CD4-positive, alpha-beta T cell (primary cell): ENCODE measurements at regions of chr17 and their contacts with region 1.

Region 1: GRCh38 chr17:17591355-17592298 is at the start of gene PEMT:
- DNase-seq: peak; percentile 84 to 98 (median 91)
- ATAC-seq: peak; percentile 87
- H3K4me3 ChIP-seq: peak within 1 kb of the TSS; percentile 64
- H3K4me3 Mint-ChIP-seq: peak within 1 kb of the TSS; percentile 89
- H3K27ac ChIP-seq: peak within 1 kb of the TSS; percentile 81 to 85
- H3K27ac Mint-ChIP-seq: peak within 1 kb of the TSS; percentile 92
- H3K4me1 ChIP-seq: peaks cover 25% of the 10 kb centered on the region
- H3K4me1 Mint-ChIP-seq: peaks cover 21% of the 10 kb centered on the region
- H3K27me3 ChIP-seq: no peaks in the 10 kb centered on the region
- H3K27me3 Mint-ChIP-seq: no peaks in the 10 kb centered on the region
- CTCF ChIP-seq: no peak
- total RNA-seq, gene PEMT: 11.4 to 12.0 TPM

Region 2: GRCh38 chr17:16653209-16654041 is 938.2 kb before region 1 on chr17 and contains the start of gene ZNF624:
- CTCF ChIA-PET with region 1: no interaction called
- POLR2A ChIA-PET with region 1: no interaction called
- intact Hi-C with region 1: loop called in 1 of 2 experiments (anchors 5 kb)
- DNase-seq: peak; percentile 78 to 94 (median 83)
- ATAC-seq: peak; percentile 97
- H3K4me3 ChIP-seq: peak within 1 kb of the TSS; percentile 93
- H3K4me3 Mint-ChIP-seq: peak within 1 kb of the TSS; percentile 86
- H3K27ac ChIP-seq: peak within 1 kb of the TSS in 1 of 2 donors; percentile 43
- H3K27ac Mint-ChIP-seq: peak within 1 kb of the TSS; percentile 84
- H3K4me1 ChIP-seq: peaks cover 14% of the 10 kb centered on the region
- H3K4me1 Mint-ChIP-seq: peaks cover 31% of the 10 kb centered on the region
- H3K27me3 ChIP-seq: no peaks in the 10 kb centered on the region
- H3K27me3 Mint-ChIP-seq: peaks cover 18% of the 10 kb centered on the region
- CTCF ChIP-seq: no peak
- total RNA-seq, gene ZNF624: 2.8 to 3.2 TPM

Region 3: DNA sequence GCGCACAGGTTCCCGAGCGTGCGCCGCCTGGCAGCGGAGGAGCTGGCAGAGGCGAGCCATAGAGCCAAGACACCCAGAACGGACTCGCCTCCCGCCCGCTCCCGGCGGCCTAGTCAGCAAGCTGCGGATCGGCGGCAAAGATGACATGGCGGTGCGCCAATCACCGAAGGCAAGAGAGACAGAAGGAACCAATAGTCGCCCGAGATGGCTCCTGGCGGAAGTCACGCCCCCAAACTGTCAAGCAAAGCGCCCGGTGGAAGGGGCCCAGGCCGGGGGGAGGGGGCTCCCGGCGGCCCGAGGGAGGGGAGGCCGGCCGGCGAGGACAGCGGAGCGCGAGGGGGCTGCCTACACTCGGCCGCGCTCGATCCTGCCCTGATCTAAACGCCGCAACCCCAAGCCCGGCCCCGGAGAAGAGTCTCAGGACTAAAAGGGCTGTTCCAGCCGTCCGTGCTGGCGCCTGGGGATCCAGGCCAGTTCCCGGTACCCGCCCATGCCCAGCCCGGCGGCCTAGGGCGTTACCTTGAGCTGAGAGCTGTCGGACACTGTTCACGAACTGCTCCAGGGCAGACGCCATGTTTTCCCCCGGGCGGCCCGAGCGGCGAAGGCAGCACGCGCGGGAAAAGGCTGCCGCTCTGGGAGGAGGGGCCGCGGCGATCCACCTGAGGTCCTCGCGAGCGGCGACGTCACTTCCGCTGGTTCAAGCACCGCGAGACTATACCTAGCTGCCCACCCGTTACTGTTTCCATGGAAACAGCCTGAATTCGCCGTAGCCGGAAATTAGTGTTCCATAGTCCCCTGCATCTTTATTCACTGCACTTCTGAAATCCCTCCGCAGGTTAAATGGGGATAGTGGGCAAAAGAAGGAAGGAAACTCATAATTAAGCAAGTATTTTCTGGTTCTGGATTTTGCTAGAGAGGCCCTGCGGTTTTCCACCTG is 310.7 kb before region 1 on chr17 and contains the start of gene COPS3:
- CTCF ChIA-PET with region 1: no interaction called
- POLR2A ChIA-PET with region 1: interaction called, 3 read pairs
- intact Hi-C with region 1: loop called in 1 of 2 experiments (anchors 5 kb)
- DNase-seq: peak; percentile 92 to 99 (median 96)
- ATAC-seq: peak; percentile 87
- H3K4me3 ChIP-seq: peak within 1 kb of the TSS; percentile 98
- H3K4me3 Mint-ChIP-seq: peak within 1 kb of the TSS; percentile 99
- H3K27ac ChIP-seq: peak within 1 kb of the TSS; percentile 96 to 99
- H3K27ac Mint-ChIP-seq: peak within 1 kb of the TSS; percentile 98
- H3K4me1 ChIP-seq: peaks cover 36% of the 10 kb centered on the region
- H3K4me1 Mint-ChIP-seq: peaks cover 46% of the 10 kb centered on the region
- H3K27me3 ChIP-seq: no peaks in the 10 kb centered on the region
- H3K27me3 Mint-ChIP-seq: no peaks in the 10 kb centered on the region
- CTCF ChIP-seq: no peak
- total RNA-seq, gene COPS3: 73.1 to 75.0 TPM

Region 4: GRCh38 chr17:17496189-17497064 is 95.2 kb before region 1 on chr17 and contains the start of gene RASD1:
- CTCF ChIA-PET with region 1: interaction called, 12 read pairs
- POLR2A ChIA-PET with region 1: interaction called, 3 read pairs
- intact Hi-C with region 1: no loop called
- DNase-seq: peak; percentile 56 to 90 (median 72)
- ATAC-seq: peak; percentile 85
- H3K4me3 ChIP-seq: peak within 1 kb of the TSS; percentile 65
- H3K4me3 Mint-ChIP-seq: peak within 1 kb of the TSS; percentile 82
- H3K27ac ChIP-seq: no peak within 1 kb of the TSS
- H3K27ac Mint-ChIP-seq: no peak within 1 kb of the TSS
- H3K4me1 ChIP-seq: peaks cover 24% of the 10 kb centered on the region
- H3K4me1 Mint-ChIP-seq: peaks cover 7% of the 10 kb centered on the region
- H3K27me3 ChIP-seq: peaks cover 8 to 11% of the 10 kb centered on the region in 2 experiments
- H3K27me3 Mint-ChIP-seq: peaks cover 10% of the 10 kb centered on the region
- CTCF ChIP-seq: peak; percentile 92
- total RNA-seq, gene RASD1: 1.8 to 2.0 TPM

Region 5: DNA sequence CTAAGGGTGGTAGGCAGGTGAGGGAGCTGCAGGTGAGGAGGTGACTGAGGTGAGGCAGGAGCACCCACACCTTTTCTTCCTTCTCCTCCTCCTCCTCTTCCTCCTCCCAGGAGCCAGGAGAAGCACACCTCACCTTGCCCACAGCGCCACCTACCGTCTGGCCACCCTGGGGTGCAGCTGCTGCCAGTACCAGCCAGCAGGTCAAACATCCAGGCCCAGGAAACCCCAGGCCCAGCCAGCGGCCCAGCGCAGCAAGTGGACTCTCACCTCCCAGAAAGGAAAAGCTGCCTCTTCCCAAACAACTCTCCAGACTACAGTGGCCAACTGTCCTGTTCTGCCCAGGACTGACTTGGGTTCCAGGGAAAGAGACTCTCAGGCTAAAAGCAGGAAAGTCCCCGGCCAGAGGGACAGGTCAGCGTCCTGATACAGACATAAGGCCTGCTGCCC is 22.9 kb before region 1 on chr17:
- CTCF ChIA-PET with region 1: no interaction called
- POLR2A ChIA-PET with region 1: no interaction called
- intact Hi-C with region 1: no loop called
- DNase-seq: peak; percentile 16 to 64 (median 38)
- ATAC-seq: no peak
- H3K4me3 ChIP-seq: no peak overlapping the region
- H3K4me3 Mint-ChIP-seq: no peak overlapping the region
- H3K27ac ChIP-seq: no peak overlapping the region
- H3K27ac Mint-ChIP-seq: no peak overlapping the region
- H3K4me1 ChIP-seq: no peaks in the 10 kb centered on the region
- H3K4me1 Mint-ChIP-seq: no peaks in the 10 kb centered on the region
- H3K27me3 ChIP-seq: no peaks in the 10 kb centered on the region
- H3K27me3 Mint-ChIP-seq: no peaks in the 10 kb centered on the region
- CTCF ChIP-seq: no peak

Region 6: GRCh38 chr17:18038861-18039534 is 447.4 kb after region 1 on chr17 and contains the starts of genes ATPAF2 and GID4:
- CTCF ChIA-PET with region 1: no interaction called
- POLR2A ChIA-PET with region 1: no interaction called
- intact Hi-C with region 1: loop called in 1 of 2 experiments (anchors 2 kb)
- DNase-seq: peak; percentile 99 to 100 (median 100)
- ATAC-seq: peak; percentile 91
- H3K4me3 ChIP-seq: peak within 1 kb of the TSS; percentile 93
- H3K4me3 Mint-ChIP-seq: peak within 1 kb of the TSS; percentile 100
- H3K27ac ChIP-seq: peak within 1 kb of the TSS; percentile 72 to 74
- H3K27ac Mint-ChIP-seq: peak within 1 kb of the TSS; percentile 91
- H3K4me1 ChIP-seq: peaks cover 34% of the 10 kb centered on the region
- H3K4me1 Mint-ChIP-seq: peaks cover 54% of the 10 kb centered on the region
- H3K27me3 ChIP-seq: no peaks in the 10 kb centered on the region
- H3K27me3 Mint-ChIP-seq: no peaks in the 10 kb centered on the region
- CTCF ChIP-seq: no peak
- total RNA-seq, gene ATPAF2: 20.8 to 21.9 TPM
- total RNA-seq, gene GID4: 3.4 to 3.7 TPM

Region 7: GRCh38 chr17:18314731-18315561 is 723.3 kb after region 1 on chr17 and contains the starts of genes SMCR8 and TOP3A:
- CTCF ChIA-PET with region 1: no interaction called
- POLR2A ChIA-PET with region 1: no interaction called
- intact Hi-C with region 1: loop called in 1 of 2 experiments (anchors 2 kb)
- DNase-seq: peak; percentile 94 to 99 (median 97)
- ATAC-seq: peak; percentile 95
- H3K4me3 ChIP-seq: peak within 1 kb of the TSS; percentile 86
- H3K4me3 Mint-ChIP-seq: peak within 1 kb of the TSS; percentile 93
- H3K27ac ChIP-seq: peak within 1 kb of the TSS; percentile 96 to 98
- H3K27ac Mint-ChIP-seq: peak within 1 kb of the TSS; percentile 84
- H3K4me1 ChIP-seq: peaks cover 74% of the 10 kb centered on the region
- H3K4me1 Mint-ChIP-seq: peaks cover 85% of the 10 kb centered on the region
- H3K27me3 ChIP-seq: no peaks in the 10 kb centered on the region
- H3K27me3 Mint-ChIP-seq: no peaks in the 10 kb centered on the region
- CTCF ChIP-seq: no peak
- total RNA-seq, gene SMCR8: 52.2 to 54.5 TPM
- total RNA-seq, gene TOP3A: 21.5 to 24.8 TPM